IMR-90 (cell line): ENCODE measurements at regions of chr4 and their contacts with region 1.

Region 1: GRCh38 chr4:168831919-168832762 is 177.9 kb downstream of the CBR4 start:
- DNase-seq: peak; percentile 78
- ATAC-seq: peak; percentile 73
- H3K4me3 ChIP-seq: peak overlapping the region; percentile 81
- H3K27ac ChIP-seq: peak overlapping the region; percentile 98
- H3K4me1 ChIP-seq: peaks cover 8% of the 10 kb centered on the region
- H3K27me3 ChIP-seq: no peaks in the 10 kb centered on the region
- CTCF ChIP-seq: no peak
- POLR2A ChIP-seq: peak; percentile 99
- RAD21 ChIP-seq: peak; percentile 7; the same call in 1 of the 2 replicates

Region 2: GRCh38 chr4:168480931-168481611 is 351.1 kb before region 1 on chr4:
- CTCF ChIA-PET with region 1: no interaction called
- POLR2A ChIA-PET with region 1: interaction called, 4 read pairs
- dilution Hi-C with region 1: no loop called
- in situ Hi-C with region 1: no loop called
- intact Hi-C with region 1: loop called (anchors 1 kb)
- DNase-seq: peak; percentile 85
- ATAC-seq: peak; percentile 21; the same call in 1 of the 2 replicates
- H3K4me3 ChIP-seq: peak overlapping the region; percentile 62
- H3K27ac ChIP-seq: peak overlapping the region; percentile 80
- H3K4me1 ChIP-seq: peaks cover 10% of the 10 kb centered on the region
- H3K27me3 ChIP-seq: no peaks in the 10 kb centered on the region
- CTCF ChIP-seq: no peak
- POLR2A ChIP-seq: no peak
- RAD21 ChIP-seq: no peak

Region 3: GRCh38 chr4:168631241-168632162 is 200.6 kb before region 1 on chr4:
- CTCF ChIA-PET with region 1: no interaction called
- POLR2A ChIA-PET with region 1: no interaction called
- dilution Hi-C with region 1: no loop called
- in situ Hi-C with region 1: no loop called
- intact Hi-C with region 1: loop called (anchors 5 kb)
- DNase-seq: peak; percentile 55
- ATAC-seq: peak; percentile 78
- H3K4me3 ChIP-seq: peak overlapping the region; percentile 54
- H3K27ac ChIP-seq: peak overlapping the region; percentile 59
- H3K4me1 ChIP-seq: peaks cover 18% of the 10 kb centered on the region
- H3K27me3 ChIP-seq: no peaks in the 10 kb centered on the region
- CTCF ChIP-seq: peak; percentile 45
- POLR2A ChIP-seq: no peak
- RAD21 ChIP-seq: peak; percentile 50

Region 4: GRCh38 chr4:168743601-168744000 is 88.5 kb before region 1 on chr4:
- CTCF ChIA-PET with region 1: no interaction called
- POLR2A ChIA-PET with region 1: interaction called, 10 read pairs
- dilution Hi-C with region 1: no loop called
- in situ Hi-C with region 1: no loop called
- intact Hi-C with region 1: no loop called
- DNase-seq: peak; percentile 85
- ATAC-seq: peak; percentile 78
- H3K4me3 ChIP-seq: no peak overlapping the region
- H3K27ac ChIP-seq: peak overlapping the region; percentile 26; the same call in 1 of the 2 replicates
- H3K4me1 ChIP-seq: peaks cover 6% of the 10 kb centered on the region
- H3K27me3 ChIP-seq: no peaks in the 10 kb centered on the region
- CTCF ChIP-seq: no peak
- POLR2A ChIP-seq: no peak
- RAD21 ChIP-seq: no peak

Region 5: DNA sequence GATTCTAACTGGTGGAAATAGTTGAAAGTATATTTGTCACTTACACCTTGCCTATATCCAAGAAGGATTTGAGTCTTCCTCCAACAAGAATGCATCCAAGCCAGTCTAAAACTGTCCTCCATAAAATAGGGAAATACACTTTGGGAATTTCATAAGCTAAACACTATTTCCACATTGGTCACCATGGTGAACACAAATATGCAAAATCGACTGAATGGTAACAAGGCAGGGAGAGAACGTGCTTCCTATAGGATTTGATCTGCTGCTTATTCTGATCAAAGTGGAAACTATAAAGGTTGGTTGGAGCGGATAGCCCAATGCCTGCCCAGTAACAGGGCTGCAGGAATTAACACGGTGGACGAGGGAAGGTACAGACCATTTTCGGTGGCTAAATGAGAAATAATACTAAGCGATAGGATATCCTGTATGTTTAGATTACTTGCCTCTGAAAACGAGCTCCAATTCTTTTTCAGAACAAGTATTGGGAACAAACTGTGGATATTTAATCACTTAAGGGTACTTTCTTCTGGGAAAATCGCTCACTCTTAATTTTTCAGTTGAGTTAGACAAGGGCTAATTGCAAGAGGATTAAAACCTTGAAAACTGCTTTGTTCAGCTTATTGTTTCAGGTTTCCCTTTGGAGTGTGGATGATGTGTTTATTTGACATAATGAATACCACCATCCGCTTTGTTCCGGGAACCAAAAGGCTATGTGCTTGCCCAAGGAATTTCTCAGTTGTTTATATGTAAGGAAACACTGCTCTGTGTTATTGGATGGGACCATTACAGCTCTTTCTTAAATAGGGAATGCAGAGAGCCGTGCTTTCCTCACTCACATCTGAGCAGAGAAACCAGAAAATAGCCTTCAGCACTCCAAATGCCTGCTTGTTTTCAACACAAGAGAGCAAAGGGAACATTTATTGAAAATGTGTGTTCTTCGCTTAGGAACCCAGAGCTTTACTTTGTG is 16.5 kb before region 1 on chr4:
- CTCF ChIA-PET with region 1: interaction called, 3 read pairs
- POLR2A ChIA-PET with region 1: interaction called, 40 read pairs
- dilution Hi-C with region 1: no loop called
- in situ Hi-C with region 1: no loop called
- intact Hi-C with region 1: loop called (anchors 1 kb)
- DNase-seq: peak; percentile 87
- ATAC-seq: peak; percentile 69
- H3K4me3 ChIP-seq: peak overlapping the region; percentile 5; the same call in 1 of the 2 replicates
- H3K27ac ChIP-seq: peak overlapping the region; percentile 92
- H3K4me1 ChIP-seq: peaks cover 19% of the 10 kb centered on the region
- H3K27me3 ChIP-seq: no peaks in the 10 kb centered on the region
- CTCF ChIP-seq: no peak
- POLR2A ChIP-seq: peak; percentile 73
- RAD21 ChIP-seq: 0 out of 2 replicates have a peak, but pooled peaks have one; percentile 5

Region 6: GRCh38 chr4:168907119-168907698 is 75.1 kb after region 1 on chr4:
- CTCF ChIA-PET with region 1: no interaction called
- POLR2A ChIA-PET with region 1: interaction called, 19 read pairs
- dilution Hi-C with region 1: no loop called
- in situ Hi-C with region 1: no loop called
- intact Hi-C with region 1: loop called (anchors 5 kb)
- DNase-seq: peak; percentile 43
- ATAC-seq: peak; percentile 39
- H3K4me3 ChIP-seq: no peak overlapping the region
- H3K27ac ChIP-seq: peak overlapping the region; percentile 61
- H3K4me1 ChIP-seq: peaks cover 5% of the 10 kb centered on the region
- H3K27me3 ChIP-seq: no peaks in the 10 kb centered on the region
- CTCF ChIP-seq: no peak
- POLR2A ChIP-seq: no peak
- RAD21 ChIP-seq: no peak

Region 7: GRCh38 chr4:168995537-168996295 is 163.6 kb after region 1 on chr4:
- CTCF ChIA-PET with region 1: no interaction called
- POLR2A ChIA-PET with region 1: no interaction called
- dilution Hi-C with region 1: no loop called
- in situ Hi-C with region 1: no loop called
- intact Hi-C with region 1: no loop called
- DNase-seq: peak; percentile 19
- ATAC-seq: peak; percentile 27
- H3K4me3 ChIP-seq: no peak overlapping the region
- H3K27ac ChIP-seq: no peak overlapping the region
- H3K4me1 ChIP-seq: no peaks in the 10 kb centered on the region; the same call in 1 of the 2 replicates
- H3K27me3 ChIP-seq: no peaks in the 10 kb centered on the region
- CTCF ChIP-seq: peak; percentile 34
- POLR2A ChIP-seq: no peak
- RAD21 ChIP-seq: peak; percentile 46